OCI-LY7 (cell line): ENCODE measurements at regions of chr10 and their contacts with region 1.

Region 1: DNA sequence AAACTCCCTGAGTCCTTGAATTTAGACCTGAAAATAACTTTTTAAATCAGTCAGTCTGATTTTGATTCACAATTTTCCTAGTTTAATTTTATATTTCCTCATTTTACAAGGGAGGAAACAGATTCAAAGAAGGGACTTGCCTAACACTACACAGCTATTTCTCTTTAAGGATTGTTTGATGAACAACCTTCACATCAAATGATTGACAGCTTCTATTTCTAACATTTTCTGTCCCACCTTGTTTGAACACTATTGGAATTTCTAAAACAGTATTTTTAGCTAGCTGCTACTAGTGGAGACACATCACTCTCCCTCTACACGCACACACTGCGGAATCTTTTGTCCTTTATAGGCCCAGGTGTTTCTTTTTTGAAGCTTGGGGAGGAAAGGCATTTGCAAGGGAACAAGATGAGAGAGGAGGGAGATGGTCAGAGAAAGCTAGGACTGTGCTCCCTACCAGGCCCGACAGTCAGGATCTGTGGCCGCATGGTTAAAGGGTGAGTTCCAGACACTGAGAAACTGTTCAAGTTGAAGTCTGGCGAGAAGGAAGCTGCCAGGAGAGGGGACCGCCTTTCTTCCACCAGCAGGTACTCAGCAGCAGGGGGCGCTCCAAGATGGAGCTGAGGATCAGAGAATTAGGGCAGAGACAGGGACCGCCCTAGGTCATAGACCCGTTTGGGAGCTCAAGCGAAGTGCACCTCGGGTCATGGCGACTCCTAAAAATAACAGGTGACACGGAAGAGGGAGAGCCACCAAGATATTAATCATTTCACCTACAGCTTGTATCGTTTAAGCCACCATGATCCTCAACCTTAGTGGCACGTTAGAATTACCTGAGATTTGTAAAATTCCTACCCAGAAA is 49.7 kb downstream of the DNAJC12 start:
- DNase-seq: peak; percentile 84
- H3K4me3 ChIP-seq: peak overlapping the region; percentile 30
- H3K27ac ChIP-seq: no peak overlapping the region
- H3K4me1 ChIP-seq: peaks cover 42% of the 10 kb centered on the region
- CTCF ChIP-seq: peak; percentile 96

Region 2: GRCh38 chr10:67837541-67838314 is 49.5 kb after region 1 on chr10 and contains the start of gene DNAJC12:
- CTCF ChIA-PET with region 1: interaction called, 5 read pairs
- POLR2A ChIA-PET with region 1: interaction called, 8 read pairs
- intact Hi-C with region 1: loop called (anchors 5 kb)
- DNase-seq: peak; percentile 79
- H3K4me3 ChIP-seq: peak within 1 kb of the TSS; percentile 66
- H3K27ac ChIP-seq: peak within 1 kb of the TSS; percentile 4
- H3K4me1 ChIP-seq: no peaks in the 10 kb centered on the region
- CTCF ChIP-seq: 0 out of 2 replicates have a peak, but pooled peaks have one; percentile 21
- total RNA-seq, gene DNAJC12: 12.8 and 13.0 TPM in 2 replicates

Region 3: DNA sequence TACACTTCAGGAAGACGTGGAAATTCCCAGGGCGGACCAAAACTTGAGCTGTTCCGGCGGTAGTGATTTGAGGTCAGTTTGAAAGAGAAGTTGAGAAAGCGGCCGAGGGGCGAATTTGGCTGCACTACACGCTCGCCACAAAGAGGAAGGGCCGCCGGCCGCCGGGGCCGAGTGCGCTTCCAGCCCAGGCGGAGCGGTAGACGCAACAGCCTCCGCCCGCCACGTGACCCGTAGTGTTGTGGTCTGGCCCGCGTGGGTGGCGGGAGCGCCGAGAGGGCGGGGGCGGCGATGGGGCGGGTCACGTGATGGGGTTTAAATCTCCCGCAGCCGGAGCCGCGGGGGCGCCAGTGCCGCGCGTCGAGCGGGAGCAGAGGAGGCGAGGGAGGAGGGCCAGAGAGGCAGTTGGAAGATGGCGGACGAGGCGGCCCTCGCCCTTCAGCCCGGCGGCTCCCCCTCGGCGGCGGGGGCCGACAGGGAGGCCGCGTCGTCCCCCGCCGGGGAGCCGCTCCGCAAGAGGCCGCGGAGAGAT is 96.1 kb after region 1 on chr10 and contains the start of gene SIRT1:
- CTCF ChIA-PET with region 1: interaction called, 6 read pairs
- POLR2A ChIA-PET with region 1: interaction called, 3 read pairs
- intact Hi-C with region 1: loop called (anchors 2 kb)
- DNase-seq: peak; percentile 96
- H3K4me3 ChIP-seq: peak within 1 kb of the TSS; percentile 78
- H3K27ac ChIP-seq: peak within 1 kb of the TSS; percentile 75
- H3K4me1 ChIP-seq: peaks cover 17% of the 10 kb centered on the region
- CTCF ChIP-seq: peak; percentile 18; the same call in 1 of the 2 replicates
- total RNA-seq, gene SIRT1: 18.0 and 20.4 TPM in 2 replicates

Region 4: GRCh38 chr10:68043030-68043429 is 254.8 kb after region 1 on chr10:
- CTCF ChIA-PET with region 1: no interaction called
- POLR2A ChIA-PET with region 1: no interaction called
- intact Hi-C with region 1: no loop called
- DNase-seq: no peak
- H3K4me3 ChIP-seq: no peak overlapping the region
- H3K27ac ChIP-seq: no peak overlapping the region
- H3K4me1 ChIP-seq: peaks cover 19% of the 10 kb centered on the region
- CTCF ChIP-seq: no peak

Region 5: GRCh38 chr10:68156373-68157185 is 368.3 kb after region 1 on chr10:
- CTCF ChIA-PET with region 1: interaction called, 4 read pairs
- POLR2A ChIA-PET with region 1: interaction called, 3 read pairs
- intact Hi-C with region 1: loop called (anchors 1 kb)
- DNase-seq: peak; percentile 69
- H3K4me3 ChIP-seq: no peak overlapping the region
- H3K27ac ChIP-seq: no peak overlapping the region
- H3K4me1 ChIP-seq: no peaks in the 10 kb centered on the region
- CTCF ChIP-seq: peak; percentile 97

Region 6: GRCh38 chr10:68301790-68302502 is 513.7 kb after region 1 on chr10:
- CTCF ChIA-PET with region 1: interaction called, 4 read pairs
- POLR2A ChIA-PET with region 1: interaction called, 8 read pairs
- intact Hi-C with region 1: loop called (anchors 2 kb)
- DNase-seq: peak; percentile 87
- H3K4me3 ChIP-seq: peak overlapping the region; percentile 50
- H3K27ac ChIP-seq: peak overlapping the region; percentile 99
- H3K4me1 ChIP-seq: peaks cover 49% of the 10 kb centered on the region
- CTCF ChIP-seq: peak; percentile 93

Region 7: DNA sequence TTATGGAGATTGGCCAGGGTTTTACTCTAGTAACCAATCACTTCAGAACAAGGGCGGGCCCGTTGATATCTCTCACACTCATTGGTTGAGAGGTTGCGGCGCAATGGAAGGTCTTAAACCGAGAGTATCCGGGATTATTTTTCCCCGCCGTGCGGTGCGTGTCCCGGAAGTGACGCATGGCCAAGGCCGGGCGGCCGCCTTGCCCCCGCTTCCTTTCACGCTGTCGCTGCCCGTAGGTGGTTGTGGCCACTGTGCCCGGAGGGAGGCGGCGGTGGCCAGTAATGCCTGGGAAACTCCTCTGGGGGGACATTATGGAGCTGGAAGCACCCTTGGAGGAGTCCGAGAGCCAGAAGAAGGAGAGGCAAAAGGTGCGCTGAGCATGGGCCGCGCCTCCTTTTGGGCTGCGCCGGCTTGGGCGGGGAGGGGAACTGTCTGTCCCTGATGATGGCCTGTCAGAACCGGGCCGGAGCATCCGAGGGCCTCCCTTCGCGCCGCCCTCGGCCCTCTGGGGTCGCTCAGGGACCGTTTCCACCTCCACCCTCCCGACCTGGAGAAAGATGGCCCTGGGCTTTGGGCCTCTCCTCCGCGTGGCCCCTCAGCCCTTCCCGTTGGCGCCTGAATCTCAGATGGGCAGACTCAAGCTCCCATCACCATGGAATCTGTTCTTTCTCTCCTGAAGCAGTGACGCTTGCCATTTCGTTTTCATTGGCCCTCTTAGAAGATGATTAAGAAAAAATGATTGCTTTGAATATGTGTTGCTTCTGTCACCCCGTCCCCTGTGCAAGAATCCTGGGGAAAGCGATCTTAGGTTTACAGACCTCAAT is 1113.1 kb after region 1 on chr10 and contains the start of gene DDX50:
- CTCF ChIA-PET with region 1: no interaction called
- POLR2A ChIA-PET with region 1: no interaction called
- intact Hi-C with region 1: loop called (anchors 5 kb)
- DNase-seq: peak; percentile 99
- H3K4me3 ChIP-seq: peak within 1 kb of the TSS; percentile 88
- H3K27ac ChIP-seq: peak within 1 kb of the TSS; percentile 58
- H3K4me1 ChIP-seq: peaks cover 21% of the 10 kb centered on the region
- CTCF ChIP-seq: no peak
- total RNA-seq, gene DDX50: 29.0 and 31.1 TPM in 2 replicates